ENCODE measurements at regions of chr11 and their contacts with region 1.

Region 1: DNA sequence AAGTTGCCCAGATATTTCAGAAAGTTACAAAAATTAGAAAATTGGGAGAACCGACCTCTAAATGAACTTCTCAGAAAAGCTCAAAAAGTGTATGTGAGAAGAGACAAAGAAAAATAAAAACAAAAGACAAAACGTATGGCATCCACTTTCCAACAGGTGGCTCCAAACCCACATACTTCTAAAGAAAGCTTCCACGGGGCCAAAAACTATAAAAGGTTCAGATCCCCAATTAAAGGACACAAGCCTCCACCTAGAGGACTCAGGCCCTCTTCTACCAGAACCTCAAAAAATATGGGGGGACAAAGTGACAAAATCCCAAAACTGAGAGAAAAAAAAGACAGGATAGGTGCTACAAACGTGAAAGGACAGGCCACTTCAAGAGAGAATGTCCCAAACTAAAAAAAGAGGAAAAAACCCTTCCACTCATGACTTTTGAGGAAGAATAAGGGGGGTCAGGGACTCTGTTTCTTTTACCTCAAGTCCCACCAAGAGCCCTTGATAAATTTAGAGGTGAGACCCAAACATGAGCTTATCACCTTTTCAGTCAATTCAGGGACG is 8.8 kb downstream of the SCGB2A1 start:
- DNase-seq: peak; percentile 39
- H3K4me3 ChIP-seq: no peak overlapping the region
- H3K27ac ChIP-seq: no peak overlapping the region
- H3K4me1 ChIP-seq: no peaks in the 10 kb centered on the region
- H3K27me3 ChIP-seq: no peaks in the 10 kb centered on the region
- CTCF ChIP-seq: peak; percentile 66

Region 2: GRCh38 chr11:62013591-62014476 is 203.4 kb before region 1 on chr11:
- CTCF ChIA-PET with region 1: no interaction called
- POLR2A ChIA-PET with region 1: no interaction called
- intact Hi-C with region 1: no loop called
- DNase-seq: no peak
- H3K4me3 ChIP-seq: no peak overlapping the region
- H3K27ac ChIP-seq: no peak overlapping the region
- H3K4me1 ChIP-seq: no peaks in the 10 kb centered on the region
- H3K27me3 ChIP-seq: no peaks in the 10 kb centered on the region
- CTCF ChIP-seq: no peak

Region 3: DNA sequence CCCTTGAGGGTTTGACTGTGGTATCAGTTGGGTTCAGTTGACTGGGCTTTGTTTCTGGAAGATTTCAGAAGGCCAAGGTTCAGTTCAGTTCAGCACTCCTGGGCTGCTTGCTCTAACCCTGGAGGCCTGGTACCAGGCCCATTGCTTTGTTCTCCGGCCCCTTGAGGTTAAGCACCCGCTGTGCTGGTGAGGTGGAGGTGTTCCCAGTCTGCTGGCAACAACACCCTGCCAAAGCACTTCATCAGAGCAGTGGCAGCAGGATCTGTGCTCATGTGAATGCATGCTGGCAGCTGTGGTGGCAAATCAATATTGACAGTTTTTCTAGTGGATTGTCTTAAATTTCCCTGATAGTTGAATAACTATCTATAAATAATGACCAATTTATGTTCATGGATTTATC is 31.1 kb before region 1 on chr11:
- CTCF ChIA-PET with region 1: no interaction called
- POLR2A ChIA-PET with region 1: no interaction called
- intact Hi-C with region 1: no loop called
- DNase-seq: no peak
- H3K4me3 ChIP-seq: no peak overlapping the region
- H3K27ac ChIP-seq: no peak overlapping the region
- H3K4me1 ChIP-seq: no peaks in the 10 kb centered on the region
- H3K27me3 ChIP-seq: peaks cover 41% of the 10 kb centered on the region
- CTCF ChIP-seq: no peak

Region 4: DNA sequence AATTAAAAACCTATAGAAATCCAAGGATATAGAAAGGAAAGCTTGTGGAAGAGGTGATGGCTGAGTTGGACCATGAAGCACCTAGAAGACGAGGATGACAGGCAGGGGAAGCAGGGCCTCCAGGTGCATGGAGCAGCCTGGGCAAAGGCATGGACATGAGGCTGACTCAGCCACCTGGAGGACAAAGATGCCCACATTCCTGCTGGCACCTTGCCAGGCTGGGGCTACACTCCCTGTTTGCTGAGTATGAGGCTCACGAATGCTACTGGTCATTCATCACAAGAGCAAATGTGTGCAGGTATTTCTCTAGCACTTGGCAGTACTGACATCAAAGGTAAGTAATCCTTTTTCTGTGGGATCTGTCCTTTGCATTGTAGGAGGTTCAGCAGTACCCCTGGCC is 15.9 kb before region 1 on chr11:
- CTCF ChIA-PET with region 1: no interaction called
- POLR2A ChIA-PET with region 1: no interaction called
- intact Hi-C with region 1: no loop called
- DNase-seq: no peak
- H3K4me3 ChIP-seq: no peak overlapping the region
- H3K27ac ChIP-seq: no peak overlapping the region
- H3K4me1 ChIP-seq: no peaks in the 10 kb centered on the region
- H3K27me3 ChIP-seq: peaks cover 15% of the 10 kb centered on the region
- CTCF ChIP-seq: no peak

Region 5: DNA sequence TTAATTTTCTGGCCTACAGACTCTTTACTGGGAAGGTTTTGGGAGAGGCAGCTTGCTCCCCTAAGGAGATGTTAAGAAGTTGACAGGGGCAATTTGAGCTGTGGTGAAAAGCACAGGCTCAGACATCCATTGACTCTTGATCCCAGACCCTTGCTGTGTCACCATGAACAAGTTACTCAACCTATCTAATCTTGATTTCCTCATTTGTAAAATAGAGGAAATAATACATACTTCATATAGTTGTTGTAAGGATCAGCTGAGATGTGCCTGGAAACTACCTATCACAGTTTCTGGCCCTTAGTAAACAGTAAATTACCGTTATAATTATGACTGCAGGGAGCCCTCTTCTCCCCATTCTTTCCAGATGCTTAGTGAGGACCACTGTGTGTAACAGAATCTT is 98.2 kb after region 1 on chr11:
- CTCF ChIA-PET with region 1: interaction called, 4 read pairs
- POLR2A ChIA-PET with region 1: no interaction called
- intact Hi-C with region 1: loop called (anchors 1 kb)
- DNase-seq: no peak
- H3K4me3 ChIP-seq: no peak overlapping the region
- H3K27ac ChIP-seq: no peak overlapping the region
- H3K4me1 ChIP-seq: no peaks in the 10 kb centered on the region
- H3K27me3 ChIP-seq: peaks cover 20% of the 10 kb centered on the region
- CTCF ChIP-seq: no peak

Region 6: GRCh38 chr11:62370743-62371440 is 153.6 kb after region 1 on chr11:
- CTCF ChIA-PET with region 1: no interaction called
- POLR2A ChIA-PET with region 1: no interaction called
- intact Hi-C with region 1: loop called (anchors 5 kb)
- DNase-seq: no peak
- H3K4me3 ChIP-seq: no peak overlapping the region
- H3K27ac ChIP-seq: no peak overlapping the region
- H3K4me1 ChIP-seq: no peaks in the 10 kb centered on the region
- H3K27me3 ChIP-seq: no peaks in the 10 kb centered on the region
- CTCF ChIP-seq: no peak

Region 7: DNA sequence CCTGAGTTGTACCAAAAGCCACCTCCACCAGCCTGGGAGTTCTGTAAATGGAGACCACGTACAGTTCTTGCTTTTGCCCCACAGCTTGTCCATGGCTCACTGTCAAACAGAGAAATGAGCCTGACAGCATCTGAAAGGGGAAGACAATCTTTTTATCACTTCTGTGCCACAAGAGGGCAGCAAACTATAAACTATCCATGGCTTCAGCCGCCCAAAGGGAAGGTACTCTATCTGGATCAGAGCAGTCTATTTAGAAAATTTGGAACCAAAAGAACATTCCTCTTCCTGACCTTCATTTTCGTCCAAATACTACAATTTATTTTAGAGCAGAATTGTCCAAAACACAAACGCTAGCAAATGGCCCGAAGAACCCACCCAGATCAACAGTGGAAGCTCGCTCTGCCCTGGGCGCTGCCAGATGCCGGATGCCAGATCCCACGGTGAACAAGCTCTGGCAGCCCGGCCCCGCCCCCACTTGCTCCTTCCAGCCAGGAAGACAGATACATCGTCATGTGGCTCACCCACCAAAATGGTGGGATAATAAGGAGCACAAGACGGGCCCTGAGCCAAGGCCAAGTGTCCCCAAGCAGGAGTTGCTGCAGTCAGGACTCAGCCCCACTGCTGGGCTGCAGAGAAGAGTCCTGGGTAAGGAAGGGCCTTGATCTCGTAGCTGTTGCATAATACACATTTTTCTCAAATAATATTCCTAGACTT is 177.7 kb after region 1 on chr11:
- CTCF ChIA-PET with region 1: no interaction called
- POLR2A ChIA-PET with region 1: no interaction called
- intact Hi-C with region 1: no loop called
- DNase-seq: peak; percentile 93
- H3K4me3 ChIP-seq: peak overlapping the region; percentile 42
- H3K27ac ChIP-seq: no peak overlapping the region
- H3K4me1 ChIP-seq: no peaks in the 10 kb centered on the region
- H3K27me3 ChIP-seq: no peaks in the 10 kb centered on the region
- CTCF ChIP-seq: peak; percentile 87